OCI-LY7 (cell line): ENCODE measurements at regions of chr11 and their contacts with region 1.

Region 1: DNA sequence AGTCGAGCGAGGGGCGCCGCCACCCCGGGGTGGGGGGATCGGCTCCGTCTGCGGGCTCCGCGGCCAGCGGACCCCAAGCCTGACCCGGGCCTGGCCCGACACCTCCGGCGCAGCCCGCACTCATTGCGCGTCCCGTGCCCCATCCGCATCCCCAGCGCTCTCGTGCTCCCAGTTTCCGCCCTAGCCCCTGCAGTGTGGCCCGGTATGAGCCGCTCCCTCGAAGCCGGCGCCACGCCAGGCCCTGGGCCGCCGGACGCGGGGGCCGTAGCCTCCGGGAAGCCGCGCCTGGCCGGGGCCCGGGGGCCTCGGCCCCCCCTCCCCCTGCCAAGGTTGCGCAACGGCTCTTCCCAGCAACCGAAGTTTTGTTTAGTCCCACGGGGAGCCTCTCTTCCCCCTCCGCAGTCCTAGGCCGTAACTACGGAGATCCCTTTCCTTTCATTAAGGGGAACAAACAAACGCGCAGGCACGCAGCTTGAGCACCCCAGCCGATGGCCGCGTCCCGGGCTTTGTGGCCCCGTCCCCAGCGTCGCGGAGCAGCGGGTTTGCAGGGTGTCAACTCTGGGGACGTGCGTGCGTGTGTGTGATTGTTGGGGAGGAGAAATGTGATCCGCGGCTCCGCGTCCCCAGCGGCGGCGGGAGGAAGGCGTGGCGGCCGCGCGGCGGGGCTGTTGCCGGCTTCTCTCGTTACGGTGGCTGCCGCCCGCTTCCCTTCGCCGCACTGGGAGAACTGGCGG is 883 bp downstream of the HIPK3 start:
- DNase-seq: peak; percentile 84
- H3K4me3 ChIP-seq: peak overlapping the region; percentile 83
- H3K27ac ChIP-seq: peak overlapping the region; percentile 85
- H3K4me1 ChIP-seq: peaks cover 27% of the 10 kb centered on the region
- CTCF ChIP-seq: peak; percentile 43

Region 2: DNA sequence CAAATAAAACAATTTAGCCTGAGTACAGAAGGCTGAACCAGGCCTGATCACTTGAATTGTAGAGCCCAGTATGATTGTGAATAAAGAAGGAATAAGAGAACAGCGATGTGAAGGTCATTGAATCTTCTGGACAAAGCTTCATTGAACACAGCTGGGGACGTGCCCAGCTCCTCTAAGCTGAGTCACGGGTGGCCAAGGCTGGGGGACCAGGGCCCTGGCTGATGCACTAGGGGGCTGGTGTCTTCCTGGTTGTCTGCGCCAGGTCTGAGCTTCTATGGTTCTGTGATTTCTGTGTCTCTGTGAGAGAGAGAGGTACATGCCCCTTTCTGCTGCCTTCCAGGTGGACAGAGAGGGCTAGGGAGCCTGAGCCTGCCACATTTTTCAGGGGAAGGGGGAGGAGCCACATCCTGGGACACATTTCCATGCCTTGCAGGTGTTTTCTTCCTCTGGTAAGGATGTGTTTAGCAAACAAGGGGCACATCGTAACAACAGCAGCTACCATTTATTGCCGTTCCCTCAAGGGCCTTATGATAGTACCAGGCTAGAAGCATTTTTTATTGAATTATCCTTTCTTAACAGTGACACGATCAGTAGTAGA is 306.9 kb after region 1 on chr11:
- CTCF ChIA-PET with region 1: no interaction called
- POLR2A ChIA-PET with region 1: no interaction called
- intact Hi-C with region 1: no loop called
- DNase-seq: no peak
- H3K4me3 ChIP-seq: no peak overlapping the region
- H3K27ac ChIP-seq: no peak overlapping the region
- H3K4me1 ChIP-seq: no peaks in the 10 kb centered on the region
- CTCF ChIP-seq: no peak

Region 3: DNA sequence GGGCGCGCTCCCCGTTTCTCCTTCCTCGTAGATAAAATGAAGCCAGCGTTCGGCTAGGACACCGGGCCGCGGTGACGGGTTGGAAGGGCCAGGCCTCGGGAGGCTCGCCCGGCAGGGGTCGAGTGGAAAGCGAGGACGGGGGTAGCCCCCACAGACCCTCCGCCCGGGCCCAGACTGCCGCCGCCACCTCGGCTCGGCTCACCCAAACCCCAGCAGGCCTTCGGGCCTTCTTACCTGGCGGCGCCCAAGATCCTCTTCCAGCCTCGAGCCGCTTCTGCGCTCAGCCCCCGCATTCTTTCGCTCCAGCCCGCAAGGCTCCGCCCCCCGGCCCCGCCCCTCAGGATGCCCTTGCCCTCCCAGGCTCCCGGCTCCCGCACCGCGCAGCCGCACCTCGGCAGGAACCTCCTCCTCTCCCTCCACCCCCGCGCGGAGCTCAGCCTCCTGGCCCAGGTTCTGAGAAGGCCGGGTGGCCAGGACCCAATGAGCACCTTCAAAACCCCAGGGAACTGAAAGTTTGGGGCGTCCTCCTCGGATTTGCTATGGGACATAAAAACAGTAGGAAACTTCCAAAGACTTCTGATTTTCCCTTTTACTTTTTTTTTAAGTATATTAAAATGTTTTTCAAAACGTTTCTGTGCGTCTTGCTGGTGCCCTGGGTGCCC is 478.2 kb after region 1 on chr11 and contains the start of gene CD59:
- CTCF ChIA-PET with region 1: interaction called, 3 read pairs
- POLR2A ChIA-PET with region 1: no interaction called
- intact Hi-C with region 1: loop called (anchors 5 kb)
- DNase-seq: peak; percentile 83
- H3K4me3 ChIP-seq: peak within 1 kb of the TSS; percentile 86
- H3K27ac ChIP-seq: peak within 1 kb of the TSS; percentile 21
- H3K4me1 ChIP-seq: peaks cover 11% of the 10 kb centered on the region
- CTCF ChIP-seq: no peak
- total RNA-seq, gene CD59: 12.7 and 20.2 TPM in 2 replicates